ENCODE measurements at regions of chr10 and their contacts with region 1.

Region 1: DNA sequence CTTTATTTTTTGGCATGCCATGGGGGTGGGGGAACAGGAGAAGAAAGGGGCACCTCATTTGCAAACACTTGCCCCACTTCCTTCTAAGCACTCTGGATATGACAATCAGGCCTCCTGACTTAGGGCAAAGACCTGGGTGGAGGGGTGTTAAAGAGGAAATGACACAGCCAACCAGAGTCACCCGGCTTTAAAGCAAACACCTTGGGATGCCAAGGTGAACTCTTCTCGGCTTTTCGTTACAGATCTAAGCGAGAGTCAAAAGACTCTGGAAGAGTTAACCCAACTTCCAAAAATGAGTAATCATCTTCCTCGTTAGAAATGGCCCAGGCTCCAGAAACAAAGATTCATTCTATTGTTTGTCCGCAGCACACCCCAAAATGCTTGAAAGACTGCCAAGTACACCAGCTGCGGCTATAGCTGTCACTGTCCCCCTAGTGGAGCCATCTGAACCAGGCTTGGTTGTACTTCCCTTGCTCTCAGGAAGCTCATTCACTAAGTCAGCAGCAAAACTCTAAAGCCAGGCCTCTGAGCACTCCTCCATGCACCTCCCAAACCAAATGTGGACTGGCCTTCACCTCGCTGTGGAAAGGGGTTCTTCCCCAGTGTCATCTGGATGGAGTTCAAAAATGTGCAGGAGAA is 24.8 kb downstream of the FAM53B start:
- DNase-seq: no peak
- H3K4me3 ChIP-seq: no peak overlapping the region
- H3K27ac ChIP-seq: no peak overlapping the region
- H3K4me1 ChIP-seq: peaks cover 0 to 1% (median 0%) of the 10 kb centered on the region in 4 experiments; a peak in 1 of 7 replicates
- H3K27me3 ChIP-seq: no peaks in the 10 kb centered on the region
- CTCF ChIP-seq: peak; percentile 48 to 68 (median 57); a peak in 3 of 4 replicates
- EP300 ChIP-seq: no peak
- POLR2A ChIP-seq: no peak
- RAD21 ChIP-seq: peak; percentile 32 to 49

Region 2: GRCh38 chr10:124647421-124648130 is 71.8 kb before region 1 on chr10:
- CTCF ChIA-PET with region 1: interaction called, 10 read pairs
- POLR2A ChIA-PET with region 1: interaction called, 3 read pairs
- DNase-seq: no peak
- H3K4me3 ChIP-seq: no peak overlapping the region
- H3K27ac ChIP-seq: no peak overlapping the region
- H3K4me1 ChIP-seq: peaks cover 0 to 24% (median 17%) of the 10 kb centered on the region in 4 experiments; a peak in 6 of 7 replicates
- H3K27me3 ChIP-seq: no peaks in the 10 kb centered on the region
- CTCF ChIP-seq: peak in 2 of 3 experiments; percentile 15 to 20; a peak in 2 of 4 replicates
- EP300 ChIP-seq: no peak
- POLR2A ChIP-seq: no peak
- RAD21 ChIP-seq: peak in 1 of 2 experiments; percentile 17; a peak in 1 of 4 replicates

Region 3: GRCh38 chr10:124671486-124672075 is 47.8 kb before region 1 on chr10:
- CTCF ChIA-PET with region 1: interaction called, 12 read pairs
- POLR2A ChIA-PET with region 1: no interaction called
- DNase-seq: no peak
- H3K4me3 ChIP-seq: no peak overlapping the region
- H3K27ac ChIP-seq: no peak overlapping the region
- H3K4me1 ChIP-seq: peaks cover 0 to 8% (median 2%) of the 10 kb centered on the region in 4 experiments; a peak in 4 of 7 replicates
- H3K27me3 ChIP-seq: no peaks in the 10 kb centered on the region
- CTCF ChIP-seq: peak; percentile 15 to 32 (median 27)
- EP300 ChIP-seq: no peak
- POLR2A ChIP-seq: no peak
- RAD21 ChIP-seq: peak in 1 of 2 experiments; percentile 20; a peak in 2 of 4 replicates

Region 4: DNA sequence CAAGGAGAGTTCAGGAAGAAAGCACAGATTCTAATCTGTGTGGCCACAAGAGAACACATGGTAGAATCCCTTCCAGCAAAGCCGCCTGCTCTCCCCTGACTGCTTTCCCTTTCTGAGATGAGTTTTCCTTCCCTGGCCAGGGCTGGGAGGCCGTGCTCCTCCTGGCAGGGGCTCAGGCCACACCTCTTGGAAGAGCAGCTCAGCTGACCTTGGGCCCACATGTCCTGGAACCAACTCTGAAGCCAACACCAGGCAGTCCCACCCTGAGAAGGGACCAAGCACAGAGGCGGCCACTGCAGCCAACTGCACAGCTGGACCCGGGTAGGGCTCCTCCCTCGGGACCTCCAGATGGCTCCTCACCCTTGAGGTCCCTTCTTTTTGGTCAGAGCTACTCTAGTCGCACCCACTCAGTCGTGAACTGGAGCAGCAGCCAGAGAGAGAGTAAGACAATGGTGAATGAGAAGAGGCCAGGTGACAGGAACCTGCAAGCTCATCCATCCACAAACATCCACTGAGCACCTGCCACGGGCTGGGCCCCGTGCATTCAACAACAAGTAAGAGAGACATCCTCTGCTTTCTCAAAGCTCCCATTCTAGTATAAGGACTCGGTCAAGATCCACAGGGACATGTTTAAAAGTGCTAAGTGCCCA is 15.4 kb before region 1 on chr10:
- CTCF ChIA-PET with region 1: interaction called, 31 read pairs
- POLR2A ChIA-PET with region 1: no interaction called
- DNase-seq: no peak
- H3K4me3 ChIP-seq: no peak overlapping the region
- H3K27ac ChIP-seq: no peak overlapping the region
- H3K4me1 ChIP-seq: peaks cover 3 to 15% (median 9%) of the 10 kb centered on the region in 4 experiments; a peak in 5 of 7 replicates
- H3K27me3 ChIP-seq: no peaks in the 10 kb centered on the region
- CTCF ChIP-seq: no peak
- EP300 ChIP-seq: no peak
- POLR2A ChIP-seq: no peak
- RAD21 ChIP-seq: no peak

Region 5: GRCh38 chr10:124708922-124709520 is 10.3 kb before region 1 on chr10:
- CTCF ChIA-PET with region 1: interaction called, 31 read pairs
- POLR2A ChIA-PET with region 1: no interaction called
- DNase-seq: no peak
- H3K4me3 ChIP-seq: no peak overlapping the region
- H3K27ac ChIP-seq: no peak overlapping the region
- H3K4me1 ChIP-seq: peaks cover 3 to 21% (median 13%) of the 10 kb centered on the region in 4 experiments; a peak in 6 of 7 replicates
- H3K27me3 ChIP-seq: no peaks in the 10 kb centered on the region
- CTCF ChIP-seq: no peak
- EP300 ChIP-seq: no peak
- POLR2A ChIP-seq: no peak
- RAD21 ChIP-seq: no peak

Region 6: DNA sequence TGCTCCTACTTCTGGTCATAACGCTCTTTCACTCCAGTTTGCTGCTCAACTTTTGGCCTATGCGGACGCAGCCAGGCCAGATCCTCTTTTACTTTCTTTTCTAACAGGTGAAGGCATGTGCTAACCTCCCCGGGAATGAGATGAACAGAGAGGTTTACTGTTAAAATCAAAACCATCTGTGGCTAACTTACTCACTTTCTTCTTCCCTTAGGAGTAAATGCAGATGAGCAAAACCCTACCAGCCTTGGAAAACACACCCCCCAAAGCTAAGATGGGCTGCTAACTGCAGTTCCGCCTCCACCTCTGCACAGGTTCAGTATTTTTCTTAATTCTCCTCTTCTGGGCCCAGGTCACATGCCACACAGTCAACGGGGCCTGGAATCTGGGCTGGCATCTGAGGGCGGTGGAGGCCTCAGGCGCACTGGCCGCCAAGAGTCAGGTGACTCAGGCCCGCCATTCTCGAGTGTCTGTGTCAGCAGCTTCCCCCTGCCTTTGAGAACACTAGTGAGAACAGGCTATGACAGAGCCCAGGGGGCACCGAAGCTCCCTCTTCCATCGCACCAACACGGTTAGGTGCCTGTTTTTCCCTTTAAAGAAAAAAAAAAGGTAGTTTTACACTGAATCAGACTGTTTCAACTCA is 13.7 kb after region 1 on chr10:
- CTCF ChIA-PET with region 1: interaction called, 13 read pairs
- POLR2A ChIA-PET with region 1: interaction called, 3 read pairs
- DNase-seq: no peak
- H3K4me3 ChIP-seq: no peak overlapping the region
- H3K27ac ChIP-seq: no peak overlapping the region
- H3K4me1 ChIP-seq: peaks cover 8 to 19% (median 11%) of the 10 kb centered on the region in 4 experiments
- H3K27me3 ChIP-seq: no peaks in the 10 kb centered on the region; a peak in 1 of 7 replicates
- CTCF ChIP-seq: no peak
- EP300 ChIP-seq: no peak
- POLR2A ChIP-seq: no peak
- RAD21 ChIP-seq: no peak

Region 7: DNA sequence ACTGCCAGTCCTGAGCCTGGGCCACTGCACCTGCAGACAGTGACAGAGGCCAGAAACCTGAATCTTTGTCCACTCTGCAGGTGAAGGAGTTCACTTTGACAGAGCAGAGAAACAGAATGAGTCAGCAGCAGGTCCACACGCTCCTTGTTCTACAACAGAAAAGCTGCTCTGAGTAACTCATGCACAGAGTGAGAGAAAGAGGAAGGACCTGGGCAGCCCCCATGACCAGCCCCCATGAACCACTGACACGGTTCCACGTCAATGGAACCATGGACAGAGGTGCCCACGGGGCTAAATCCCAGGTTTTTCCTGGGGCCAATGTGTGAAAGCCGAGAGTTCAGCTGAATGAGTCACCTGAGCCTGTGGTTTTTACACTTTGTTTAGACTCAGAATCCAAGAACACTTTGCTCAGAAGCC is 481.8 kb after region 1 on chr10:
- CTCF ChIA-PET with region 1: no interaction called
- POLR2A ChIA-PET with region 1: no interaction called
- DNase-seq: no peak
- H3K4me3 ChIP-seq: no peak overlapping the region
- H3K27ac ChIP-seq: no peak overlapping the region
- H3K4me1 ChIP-seq: no peaks in the 10 kb centered on the region; a peak in 1 of 7 replicates
- H3K27me3 ChIP-seq: no peaks in the 10 kb centered on the region
- CTCF ChIP-seq: no peak
- EP300 ChIP-seq: no peak
- POLR2A ChIP-seq: no peak
- RAD21 ChIP-seq: no peak

Measured in H1 (cell line).